MCF 10A (cell line): ENCODE measurements at regions of chr22 and their contacts with region 1.

Region 1: DNA sequence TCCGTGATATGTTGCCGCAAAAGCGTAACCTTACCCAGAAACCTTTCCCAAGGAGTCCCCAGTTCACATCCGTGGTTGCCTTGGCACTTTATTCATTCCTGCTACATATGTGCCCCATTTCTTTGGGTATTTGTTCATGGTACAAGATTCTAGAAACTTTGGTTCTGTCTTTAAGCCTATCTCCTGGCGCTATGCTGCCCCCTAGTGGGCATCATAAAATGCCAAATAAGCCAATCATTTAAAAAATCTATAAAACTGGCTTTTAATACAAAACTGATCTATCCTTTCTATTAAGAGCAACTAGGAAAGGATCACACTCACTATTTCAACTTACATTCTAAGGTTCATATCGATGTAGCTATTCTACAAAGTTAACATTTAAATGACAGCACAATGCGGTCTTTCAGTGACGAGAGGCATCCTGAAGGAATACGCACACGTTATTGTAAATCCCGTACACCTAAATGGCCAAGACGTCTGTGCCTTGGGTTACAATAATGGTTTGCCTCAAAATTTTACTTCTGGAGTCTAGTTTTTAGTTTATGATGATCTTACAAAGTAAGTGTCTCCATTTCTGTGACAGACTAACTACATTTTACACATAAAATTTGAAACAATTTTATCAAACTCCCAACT is 16.2 kb downstream of the PIWIL3 start:
- DNase-seq: peak; percentile 71
- H3K4me3 Mint-ChIP-seq: no peak overlapping the region
- H3K27ac Mint-ChIP-seq: no peak overlapping the region
- H3K4me1 Mint-ChIP-seq: no peaks in the 10 kb centered on the region
- H3K27me3 Mint-ChIP-seq: peaks cover 53% of the 10 kb centered on the region
- CTCF ChIP-seq: peak; percentile 57

Region 2: DNA sequence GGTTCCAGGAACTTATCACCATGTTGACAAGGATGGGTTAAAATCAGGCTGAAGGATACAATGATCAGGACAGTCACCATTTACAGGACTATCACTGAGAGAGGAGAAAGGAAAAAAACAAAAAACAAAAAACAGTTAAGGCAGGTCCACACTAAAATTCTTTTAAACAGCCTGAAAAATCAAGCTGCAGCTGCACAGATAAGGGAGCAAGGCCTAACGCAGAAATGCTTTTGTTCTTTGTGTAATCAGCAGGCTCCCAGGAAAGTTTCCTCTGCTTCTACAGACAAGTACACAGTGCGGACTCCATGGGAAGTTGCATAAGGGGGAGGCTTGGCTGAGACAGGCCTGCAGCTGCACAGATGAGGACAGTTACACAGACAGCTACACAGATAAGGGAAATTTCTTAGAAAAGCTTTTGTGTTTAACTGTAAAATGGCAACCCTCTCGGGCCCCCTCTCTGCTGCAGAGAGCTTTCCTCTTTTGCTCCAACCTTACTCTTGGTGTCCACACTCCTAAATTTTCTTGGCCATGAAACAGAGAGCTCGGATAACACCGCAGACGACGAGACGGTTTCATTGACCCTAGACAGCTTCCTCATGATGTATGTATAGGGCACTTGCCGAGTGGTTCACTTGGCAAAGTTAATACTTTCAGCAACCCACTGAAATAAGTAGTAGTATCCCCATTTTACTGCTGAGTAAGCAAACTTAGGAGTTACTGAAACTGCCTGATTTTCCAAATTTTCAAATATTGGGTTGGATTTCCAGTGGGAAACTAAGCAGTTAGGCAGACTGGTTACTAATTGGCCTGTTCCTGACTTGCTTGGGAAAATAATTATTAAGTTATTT is 29.3 kb before region 1 on chr22:
- CTCF ChIA-PET with region 1: interaction called, 12 read pairs
- POLR2A ChIA-PET with region 1: no interaction called
- intact Hi-C with region 1: no loop called
- DNase-seq: no peak
- H3K4me3 Mint-ChIP-seq: no peak overlapping the region
- H3K27ac Mint-ChIP-seq: no peak overlapping the region
- H3K4me1 Mint-ChIP-seq: peaks cover 7% of the 10 kb centered on the region
- H3K27me3 Mint-ChIP-seq: peaks cover 93% of the 10 kb centered on the region
- CTCF ChIP-seq: no peak

Region 3: DNA sequence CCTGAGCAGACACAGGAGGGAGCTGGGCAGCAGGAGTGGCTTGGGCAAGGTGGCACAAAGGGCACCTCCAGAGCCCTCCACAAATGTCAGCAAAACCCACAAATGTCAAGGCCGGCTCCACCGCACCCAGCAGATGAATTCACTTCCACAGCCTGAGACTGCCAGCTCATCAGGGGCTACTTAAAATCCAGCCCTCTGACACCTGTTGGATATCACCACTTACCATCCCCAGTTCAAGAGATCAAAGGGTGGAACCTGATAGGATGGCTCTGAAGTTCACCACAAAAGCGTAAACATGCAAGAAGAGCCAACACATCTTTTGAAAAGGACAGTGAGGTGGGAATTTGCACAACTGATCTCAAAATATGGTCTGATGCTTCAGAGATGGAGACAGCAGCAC is 637.6 kb after region 1 on chr22:
- CTCF ChIA-PET with region 1: interaction called, 11 read pairs
- POLR2A ChIA-PET with region 1: no interaction called
- intact Hi-C with region 1: no loop called
- DNase-seq: no peak
- H3K4me3 Mint-ChIP-seq: no peak overlapping the region
- H3K27ac Mint-ChIP-seq: no peak overlapping the region
- H3K4me1 Mint-ChIP-seq: peaks cover 11% of the 10 kb centered on the region
- H3K27me3 Mint-ChIP-seq: no peaks in the 10 kb centered on the region
- CTCF ChIP-seq: no peak